Motor neuron (in vitro differentiated cells): ENCODE measurements at regions of chr1 and their contacts with region 1.

Region 1: DNA sequence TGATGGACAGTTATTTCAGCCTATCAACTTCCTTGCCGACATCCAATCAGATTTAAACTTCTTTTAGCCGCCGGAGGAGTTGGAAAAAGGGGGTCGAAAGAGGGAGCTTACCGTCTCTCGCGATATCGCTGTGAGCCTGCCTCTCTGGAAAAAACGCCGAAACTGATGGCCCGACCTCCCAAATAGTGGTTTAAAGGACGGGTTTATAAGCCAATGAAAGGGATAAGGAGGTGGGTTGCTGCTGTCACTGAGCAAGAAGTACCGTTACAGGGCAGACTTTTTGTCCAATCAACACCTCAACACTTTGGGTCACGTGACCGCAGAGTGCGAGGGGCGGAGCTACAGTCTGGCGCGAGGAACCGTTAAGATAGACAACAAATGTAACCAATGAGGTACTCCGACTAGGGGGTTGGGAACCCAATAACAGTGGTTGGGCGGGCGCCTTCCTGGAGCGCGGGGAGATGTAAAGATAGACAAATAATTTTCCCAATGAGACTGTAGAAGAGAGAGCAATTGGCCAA is at the start of gene RBM15:
- ATAC-seq: peak; percentile 71 to 85 (median 83)
- H3K4me3 ChIP-seq: peak within 1 kb of the TSS; percentile 59 to 85 (median 73)
- H3K27ac ChIP-seq: peak within 1 kb of the TSS; percentile 91 to 97
- H3K4me1 ChIP-seq: peaks cover 26 to 42% of the 10 kb centered on the region in 2 donors
- total RNA-seq, gene RBM15: 17.9 to 49.7 (median 36.7) TPM

Region 2: DNA sequence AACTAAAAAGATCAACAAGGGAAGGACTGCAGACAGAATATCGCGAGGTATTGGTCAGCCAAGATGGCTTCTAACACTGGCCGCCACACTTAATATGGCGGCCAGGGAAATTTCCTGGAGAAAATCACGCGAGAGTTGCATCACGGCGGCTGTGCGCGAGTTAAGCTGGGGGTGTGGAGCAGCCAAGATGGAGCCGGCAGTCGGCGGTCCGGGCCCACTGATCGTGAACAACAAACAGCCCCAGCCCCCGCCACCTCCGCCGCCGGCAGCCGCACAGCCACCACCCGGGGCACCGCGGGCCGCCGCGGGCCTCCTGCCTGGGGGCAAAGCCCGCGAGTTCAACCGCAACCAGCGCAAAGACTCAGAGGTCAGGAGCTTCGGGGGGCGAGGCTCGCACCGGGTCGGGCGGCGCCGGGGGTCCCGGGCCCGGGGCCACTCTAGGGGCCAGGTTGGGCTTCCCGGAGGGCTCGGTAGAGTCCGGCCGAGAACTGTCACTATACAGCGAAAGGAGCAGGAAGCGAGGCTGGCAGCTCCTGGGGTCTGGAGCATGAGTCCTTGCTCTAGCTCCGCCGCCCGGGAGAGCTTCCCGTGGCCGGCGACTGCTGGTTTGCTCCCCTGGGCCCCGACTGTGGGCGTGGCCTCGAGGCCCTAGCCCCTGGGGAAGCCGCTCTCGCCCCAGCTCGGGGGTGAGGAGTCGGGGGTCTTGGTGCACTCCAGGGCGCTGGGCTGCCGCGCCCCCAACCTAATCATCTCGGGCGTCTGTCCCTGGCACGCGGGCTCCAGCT is 304.3 kb before region 1 on chr1 and contains the start of gene STRIP1:
- in situ Hi-C with region 1: loop called in 1 of 9 experiments (anchors 25 kb)
- ATAC-seq: peak; percentile 79 to 88 (median 86)
- H3K4me3 ChIP-seq: peak within 1 kb of the TSS; percentile 91 to 99 (median 96)
- H3K27ac ChIP-seq: peak within 1 kb of the TSS; percentile 96 to 98
- H3K4me1 ChIP-seq: peaks cover 26 to 38% of the 10 kb centered on the region in 2 donors
- total RNA-seq, gene STRIP1: 29.7 to 98.3 (median 60.3) TPM

Region 3: DNA sequence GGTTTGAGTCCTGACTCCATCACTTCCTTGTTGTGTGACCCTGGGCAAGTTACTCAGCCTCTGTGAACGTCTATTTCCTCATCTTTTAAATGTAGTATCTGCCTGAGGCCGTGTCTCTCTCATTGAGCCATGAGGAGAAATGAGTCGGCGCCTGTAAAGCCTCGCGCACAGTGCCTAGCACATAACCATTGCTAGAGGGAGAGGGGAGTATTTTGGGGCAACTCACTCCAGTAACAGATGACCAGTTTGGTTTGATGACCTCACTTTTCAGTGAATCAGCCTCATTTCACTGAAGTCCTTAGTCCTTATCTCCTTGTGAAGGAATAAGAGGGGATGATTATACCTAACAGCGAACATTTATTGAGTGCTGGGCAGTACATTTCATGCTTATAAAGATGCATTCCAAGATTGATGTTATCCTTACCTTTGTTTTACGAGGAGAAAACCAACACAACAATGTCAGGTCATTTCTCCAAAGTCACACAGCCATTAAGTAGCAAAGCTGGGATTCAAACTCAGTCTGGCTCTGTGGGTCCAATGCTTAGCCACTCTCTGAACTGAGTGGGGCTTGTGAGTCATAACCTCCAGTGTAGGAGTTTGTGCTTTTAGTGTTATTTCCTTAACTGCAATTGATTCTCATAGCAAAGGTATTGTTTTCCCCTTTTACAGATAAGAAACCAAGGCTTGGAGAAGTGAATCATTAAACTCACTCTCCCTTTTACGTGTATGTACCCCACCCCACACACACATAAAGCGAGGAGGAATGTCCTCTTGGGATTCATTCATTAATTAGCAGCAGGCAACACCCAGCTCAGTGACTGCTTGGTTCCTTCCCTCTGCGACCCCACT is 102.9 kb before region 1 on chr1:
- in situ Hi-C with region 1: no loop called
- ATAC-seq: peak; percentile 35 to 89 (median 76)
- H3K4me3 ChIP-seq: no peak overlapping the region
- H3K27ac ChIP-seq: no peak overlapping the region
- H3K4me1 ChIP-seq: peaks cover 9 to 19% of the 10 kb centered on the region in 2 donors